Dendritic cell treated with granulocyte-macrophage colony-stimulating factor and Interleukin-4, amounts not matched to agents 40 ng/mL and 50 ng/mL, for 4 days (primary cell): ENCODE measurements at regions of chr13 and their contacts with region 1.

Region 1: DNA sequence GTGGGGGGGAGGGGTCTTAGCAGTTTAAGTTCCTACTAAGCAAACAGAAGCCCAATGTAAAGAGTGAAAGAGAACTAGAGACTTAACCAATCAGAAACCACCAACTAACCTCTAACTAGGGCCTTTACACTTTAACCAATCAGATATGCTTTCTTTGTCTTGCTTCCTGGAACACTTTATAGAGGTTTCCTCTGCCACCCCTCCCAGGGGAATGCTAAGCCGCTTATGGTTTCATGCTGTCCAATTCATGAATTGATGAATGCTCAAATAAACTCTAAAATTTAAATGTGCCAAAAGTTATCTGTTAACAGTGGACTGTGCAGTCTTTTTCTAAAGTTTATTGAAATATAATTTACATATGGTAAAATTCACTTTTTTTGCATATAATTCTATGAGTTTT is 33.9 kb upstream of the LATS2 start:
- H3K4me3 Mint-ChIP-seq: no peak overlapping the region
- H3K27ac Mint-ChIP-seq: no peak overlapping the region
- H3K4me1 Mint-ChIP-seq: no peaks in the 10 kb centered on the region
- H3K27me3 Mint-ChIP-seq: no peaks in the 10 kb centered on the region

Region 2: DNA sequence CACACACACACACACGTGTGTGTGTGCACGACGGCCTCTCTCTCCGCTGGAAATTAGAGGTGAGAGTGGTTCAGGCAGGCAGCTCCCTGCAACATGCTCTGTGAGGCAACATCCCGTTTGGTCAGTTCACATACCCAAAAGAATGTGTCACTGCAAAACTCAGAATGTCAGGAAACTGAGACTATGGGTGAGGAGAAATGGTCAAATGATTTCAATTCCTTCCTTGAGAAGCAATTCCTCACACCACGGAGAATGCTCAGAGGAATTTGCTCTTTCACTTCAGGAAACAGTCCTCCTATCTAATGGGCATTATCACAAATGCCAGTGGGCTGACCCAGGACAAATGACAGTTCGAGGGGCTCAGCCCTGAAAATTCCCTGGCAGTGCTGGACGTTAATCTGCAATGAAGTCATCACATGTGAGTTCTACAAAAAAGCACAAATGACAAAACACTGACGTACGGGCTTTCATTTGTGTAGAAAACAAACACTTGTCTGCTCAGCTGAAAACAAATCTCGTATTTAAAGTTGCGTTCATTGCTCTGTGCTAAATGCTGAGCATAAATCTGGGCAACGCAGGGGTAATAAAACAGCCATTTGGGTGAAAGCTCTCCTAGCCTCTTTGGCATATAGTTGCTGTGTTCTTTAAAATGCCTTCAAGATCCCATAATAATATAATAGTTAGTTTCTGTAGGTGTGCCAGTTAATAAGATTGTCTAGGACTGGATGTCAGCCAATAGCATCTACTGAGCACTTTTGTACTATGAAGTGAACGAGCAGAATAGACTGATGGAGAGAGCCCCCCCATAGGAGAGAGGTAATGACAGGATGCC is 15.3 kb before region 1 on chr13:
- intact Hi-C with region 1: loop called (anchors 2 kb)
- H3K4me3 Mint-ChIP-seq: no peak overlapping the region
- H3K27ac Mint-ChIP-seq: no peak overlapping the region
- H3K4me1 Mint-ChIP-seq: peaks cover 22% of the 10 kb centered on the region
- H3K27me3 Mint-ChIP-seq: peaks cover 11% of the 10 kb centered on the region

Region 3: DNA sequence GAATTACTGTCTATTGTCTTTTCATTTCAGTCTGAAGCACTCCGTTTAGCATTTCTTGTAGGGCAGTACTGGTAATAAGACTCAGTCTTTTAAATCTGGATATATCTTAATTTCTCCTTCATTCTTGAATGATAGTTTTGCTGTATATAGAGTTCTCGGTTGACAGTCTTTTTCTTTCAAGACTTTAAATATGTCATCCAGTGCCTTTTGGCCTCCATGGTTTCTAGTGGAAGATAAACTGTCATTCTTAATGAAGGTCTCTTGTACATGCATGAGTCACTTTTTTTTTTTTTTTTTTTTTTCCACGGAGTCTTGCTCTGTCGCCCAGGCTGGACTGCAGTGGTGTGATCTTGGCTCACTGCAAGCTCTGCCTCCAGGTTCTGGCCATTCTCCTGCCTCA is 391.0 kb after region 1 on chr13:
- intact Hi-C with region 1: no loop called
- H3K4me3 Mint-ChIP-seq: no peak overlapping the region
- H3K27ac Mint-ChIP-seq: no peak overlapping the region
- H3K4me1 Mint-ChIP-seq: no peaks in the 10 kb centered on the region
- H3K27me3 Mint-ChIP-seq: peaks cover 2% of the 10 kb centered on the region